Caco-2 (cell line): ENCODE measurements at regions of chr18 and their contacts with region 1.

Region 1: DNA sequence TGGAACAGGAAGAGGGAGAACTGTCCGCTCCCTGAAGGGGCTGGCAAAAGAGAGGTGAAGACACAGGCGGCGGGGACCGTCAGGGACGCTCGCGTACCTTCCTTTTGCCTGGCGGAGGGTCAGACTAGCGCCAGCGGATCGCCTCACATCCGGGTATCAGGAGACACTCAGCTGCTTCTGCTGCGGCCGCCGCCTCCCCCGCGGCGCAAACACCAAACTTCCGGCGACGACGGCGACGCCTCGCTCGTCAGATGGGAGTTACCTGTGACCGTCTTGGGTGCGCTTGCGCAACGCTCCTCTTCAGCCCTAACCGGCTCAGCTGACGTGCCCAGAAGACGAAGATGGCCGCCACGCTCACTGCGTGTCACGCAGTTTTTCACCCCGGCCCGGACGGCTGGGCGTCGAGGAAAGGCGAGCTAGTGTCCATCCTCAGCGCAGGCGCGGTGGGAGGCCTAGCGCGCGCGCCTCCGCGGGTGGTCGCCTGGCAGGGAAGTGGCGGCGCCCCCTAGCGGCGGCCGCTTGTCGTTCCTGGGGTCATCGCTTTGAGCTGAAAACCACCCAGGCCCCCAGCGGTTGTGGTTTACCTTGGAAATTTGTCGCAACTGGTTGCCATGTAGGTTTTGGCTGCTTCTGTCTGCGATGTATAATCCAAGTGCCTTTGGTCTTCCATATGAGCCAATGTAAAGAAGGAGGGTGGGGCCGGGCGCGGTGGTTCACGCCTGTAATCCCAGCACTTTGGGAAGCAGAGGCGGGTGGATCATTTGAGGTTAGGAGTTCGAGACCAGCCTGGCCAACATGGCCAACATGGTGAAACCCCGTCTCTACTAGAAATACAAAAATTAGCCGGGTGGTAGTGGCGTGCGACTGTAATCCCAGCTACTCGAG is at the start of gene ESCO1:
- DNase-seq: peak; percentile 98 to 99
- H3K4me3 ChIP-seq: peak within 1 kb of the TSS; percentile 72
- H3K4me3 Mint-ChIP-seq: peak within 1 kb of the TSS; percentile 96
- H3K27ac Mint-ChIP-seq: peak within 1 kb of the TSS; percentile 99
- H3K4me1 ChIP-seq: peaks cover 4% of the 10 kb centered on the region; the same call in 1 of the 2 replicates
- H3K4me1 Mint-ChIP-seq: peaks cover 6% of the 10 kb centered on the region
- H3K27me3 ChIP-seq: no peaks in the 10 kb centered on the region
- H3K27me3 Mint-ChIP-seq: no peaks in the 10 kb centered on the region
- CTCF ChIP-seq: peak; percentile 85 to 93
- total RNA-seq, gene ESCO1: 23.0 and 24.2 TPM in 2 replicates

Region 2: DNA sequence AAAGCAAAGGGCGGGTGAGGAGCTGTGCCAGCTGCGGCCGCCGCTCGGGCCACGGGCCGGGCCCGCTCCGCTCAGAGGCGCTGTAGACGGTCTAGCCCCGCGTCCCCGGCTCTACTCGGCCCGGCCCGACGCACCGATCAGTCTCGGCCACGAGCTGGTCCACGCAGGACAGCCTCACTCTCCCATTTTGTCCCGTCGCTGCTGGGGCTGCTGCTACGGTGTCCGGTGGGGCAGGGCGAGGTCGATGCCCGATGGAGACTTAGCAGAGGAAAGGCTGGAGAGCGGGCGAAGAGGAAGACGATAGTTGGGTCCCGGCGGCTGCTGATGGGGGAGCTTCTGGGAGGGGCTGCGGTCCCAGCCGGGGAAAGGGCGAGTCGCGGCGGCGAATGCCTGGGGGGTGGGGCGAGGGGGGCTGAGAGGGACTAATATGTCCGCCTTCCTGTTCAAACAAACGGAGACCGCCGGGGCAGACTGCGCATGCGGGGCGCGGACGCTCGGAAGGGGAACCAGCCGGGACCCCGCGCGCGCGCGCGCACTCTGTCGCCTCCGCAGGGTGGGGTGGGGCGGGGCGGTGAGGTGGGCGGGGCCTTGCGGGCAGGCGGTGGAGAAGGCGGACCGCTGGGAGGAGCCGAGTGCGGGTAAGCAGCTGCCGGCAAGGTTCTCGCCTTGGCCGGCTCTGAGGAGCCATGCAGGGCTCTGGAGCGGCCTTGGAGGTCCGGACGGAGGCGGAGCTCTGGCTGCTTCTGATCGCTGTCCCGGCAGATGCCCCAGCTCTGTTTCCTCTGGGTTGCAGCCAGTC is 489.2 kb before region 1 on chr18 and contains the start of gene ROCK1:
- CTCF ChIA-PET with region 1: interaction called, 3 read pairs
- POLR2A ChIA-PET with region 1: interaction called, 3 read pairs
- intact Hi-C with region 1: loop called (anchors 1 kb)
- DNase-seq: peak; percentile 97 to 98
- H3K4me3 ChIP-seq: peak within 1 kb of the TSS; percentile 90
- H3K4me3 Mint-ChIP-seq: no peak within 1 kb of the TSS
- H3K27ac Mint-ChIP-seq: peak within 1 kb of the TSS; percentile 79
- H3K4me1 ChIP-seq: peaks cover 7% of the 10 kb centered on the region; the same call in 1 of the 2 replicates
- H3K4me1 Mint-ChIP-seq: no peaks in the 10 kb centered on the region
- H3K27me3 ChIP-seq: no peaks in the 10 kb centered on the region
- H3K27me3 Mint-ChIP-seq: no peaks in the 10 kb centered on the region
- CTCF ChIP-seq: no peak
- total RNA-seq, gene ROCK1: 50.3 and 51.3 TPM in 2 replicates

Region 3: DNA sequence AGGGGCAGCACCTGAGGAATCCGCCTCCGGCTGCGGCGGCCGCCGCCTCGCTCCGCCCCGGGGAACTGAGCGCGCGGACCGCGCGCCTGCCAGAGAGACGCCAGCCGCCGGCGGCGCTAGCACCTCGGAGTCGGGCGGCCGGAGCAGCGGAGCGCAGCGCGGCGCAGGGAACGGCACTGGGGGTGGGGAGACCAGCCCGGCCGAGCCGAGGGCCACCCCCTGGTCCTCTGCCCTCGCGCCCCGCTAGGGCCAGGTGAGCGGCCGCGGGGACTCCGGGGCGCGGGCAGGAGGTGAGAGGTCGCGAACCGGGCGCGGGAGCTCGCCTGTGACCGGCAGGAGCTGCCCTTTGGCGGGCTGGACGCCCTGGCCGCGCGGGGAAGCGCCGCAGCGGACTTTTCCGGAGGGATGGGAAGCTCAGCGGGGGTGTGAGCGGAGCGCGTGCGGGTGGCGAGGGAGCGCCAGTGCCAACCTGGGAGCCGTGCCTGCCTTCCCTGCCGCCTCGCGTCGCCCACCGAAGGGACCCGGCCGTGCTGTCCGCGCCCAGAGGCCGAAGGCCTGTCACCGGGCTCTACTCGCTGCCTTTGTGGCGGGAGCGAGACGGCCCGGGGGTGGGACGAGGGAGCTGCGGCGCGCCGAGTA is 358.5 kb before region 1 on chr18 and contains the start of gene GREB1L:
- CTCF ChIA-PET with region 1: interaction called, 4 read pairs
- POLR2A ChIA-PET with region 1: no interaction called
- intact Hi-C with region 1: loop called (anchors 5 kb)
- DNase-seq: peak; percentile 82 to 91
- H3K4me3 ChIP-seq: peak within 1 kb of the TSS; percentile 99
- H3K4me3 Mint-ChIP-seq: peak within 1 kb of the TSS; percentile 95
- H3K27ac Mint-ChIP-seq: peak within 1 kb of the TSS; percentile 91
- H3K4me1 ChIP-seq: peaks cover 25% of the 10 kb centered on the region; the same call in 1 of the 2 replicates
- H3K4me1 Mint-ChIP-seq: peaks cover 18% of the 10 kb centered on the region
- H3K27me3 ChIP-seq: no peaks in the 10 kb centered on the region
- H3K27me3 Mint-ChIP-seq: no peaks in the 10 kb centered on the region
- CTCF ChIP-seq: peak; percentile 28 to 35
- total RNA-seq, gene GREB1L: 71.1 and 75.4 TPM in 2 replicates

Region 4: GRCh38 chr18:21548637-21549036 is 52.1 kb before region 1 on chr18:
- CTCF ChIA-PET with region 1: no interaction called
- POLR2A ChIA-PET with region 1: interaction called, 3 read pairs
- intact Hi-C with region 1: loop called (anchors 10 kb)
- DNase-seq: no peak
- H3K4me3 ChIP-seq: no peak overlapping the region
- H3K4me3 Mint-ChIP-seq: no peak overlapping the region
- H3K27ac Mint-ChIP-seq: no peak overlapping the region
- H3K4me1 ChIP-seq: peaks cover 19% of the 10 kb centered on the region
- H3K4me1 Mint-ChIP-seq: peaks cover 15% of the 10 kb centered on the region
- H3K27me3 ChIP-seq: no peaks in the 10 kb centered on the region
- H3K27me3 Mint-ChIP-seq: no peaks in the 10 kb centered on the region
- CTCF ChIP-seq: no peak

Region 5: DNA sequence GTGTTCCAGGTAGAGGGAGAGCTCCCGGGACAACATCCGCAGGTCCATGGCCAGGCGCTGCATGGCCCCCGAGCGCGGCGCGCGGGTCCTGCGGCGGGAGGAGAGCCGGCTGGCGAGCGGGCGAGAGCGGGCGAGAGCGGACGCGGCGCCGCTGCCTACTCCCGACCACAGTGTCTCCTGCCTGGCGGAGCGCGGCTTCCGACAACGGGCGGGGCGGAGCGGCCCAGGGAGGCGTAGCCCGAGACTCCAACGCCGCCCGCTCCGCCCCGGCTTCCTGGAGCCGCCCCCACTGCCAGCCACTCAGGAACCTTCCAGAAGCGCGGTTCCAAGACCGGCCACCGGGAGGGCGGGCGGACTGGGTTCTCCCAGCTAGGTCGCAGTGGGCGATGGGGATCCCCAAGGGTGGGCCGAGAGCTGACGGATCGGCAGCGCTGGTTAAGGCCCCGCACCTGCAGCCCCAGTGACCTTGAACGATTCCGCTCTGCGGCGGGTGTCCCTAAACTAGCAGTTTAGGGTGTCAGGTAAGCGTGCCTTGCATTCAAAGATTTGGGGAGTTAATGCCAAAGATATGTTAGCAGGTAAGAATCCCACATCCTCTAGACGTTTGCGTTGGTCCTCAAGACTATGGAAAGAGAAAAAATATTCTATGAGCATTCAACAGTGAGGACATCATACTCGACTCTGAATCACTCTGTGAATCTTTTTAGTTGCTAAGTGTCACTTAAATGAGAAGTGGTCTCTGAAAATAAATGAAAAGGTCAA is 104.0 kb after region 1 on chr18 and contains the start of gene ABHD3:
- CTCF ChIA-PET with region 1: interaction called, 3 read pairs
- POLR2A ChIA-PET with region 1: interaction called, 12 read pairs
- intact Hi-C with region 1: no loop called
- DNase-seq: peak; percentile 94 to 96
- H3K4me3 ChIP-seq: peak within 1 kb of the TSS; percentile 84
- H3K4me3 Mint-ChIP-seq: peak within 1 kb of the TSS; percentile 86
- H3K27ac Mint-ChIP-seq: peak within 1 kb of the TSS; percentile 64
- H3K4me1 ChIP-seq: peaks cover 6% of the 10 kb centered on the region
- H3K4me1 Mint-ChIP-seq: peaks cover 6% of the 10 kb centered on the region
- H3K27me3 ChIP-seq: no peaks in the 10 kb centered on the region
- H3K27me3 Mint-ChIP-seq: no peaks in the 10 kb centered on the region
- CTCF ChIP-seq: peak; percentile 25 to 39
- total RNA-seq, gene ABHD3: 29.3 and 31.8 TPM in 2 replicates

Region 6: GRCh38 chr18:22074282-22075069 is 473.7 kb after region 1 on chr18:
- CTCF ChIA-PET with region 1: no interaction called
- POLR2A ChIA-PET with region 1: no interaction called
- intact Hi-C with region 1: loop called (anchors 5 kb)
- DNase-seq: no peak
- H3K4me3 ChIP-seq: no peak overlapping the region
- H3K4me3 Mint-ChIP-seq: no peak overlapping the region
- H3K27ac Mint-ChIP-seq: no peak overlapping the region
- H3K4me1 ChIP-seq: peaks cover 25% of the 10 kb centered on the region
- H3K4me1 Mint-ChIP-seq: peaks cover 31% of the 10 kb centered on the region
- H3K27me3 ChIP-seq: no peaks in the 10 kb centered on the region
- H3K27me3 Mint-ChIP-seq: no peaks in the 10 kb centered on the region
- CTCF ChIP-seq: no peak

Region 7: GRCh38 chr18:22300665-22301636 is 700.2 kb after region 1 on chr18:
- CTCF ChIA-PET with region 1: no interaction called
- POLR2A ChIA-PET with region 1: no interaction called
- intact Hi-C with region 1: no loop called
- DNase-seq: peak in 1 of 2 experiments; percentile 15
- H3K4me3 ChIP-seq: no peak overlapping the region
- H3K4me3 Mint-ChIP-seq: no peak overlapping the region
- H3K27ac Mint-ChIP-seq: peak overlapping the region; percentile 13
- H3K4me1 ChIP-seq: peaks cover 14% of the 10 kb centered on the region; the same call in 1 of the 2 replicates
- H3K4me1 Mint-ChIP-seq: peaks cover 10% of the 10 kb centered on the region
- H3K27me3 ChIP-seq: no peaks in the 10 kb centered on the region
- H3K27me3 Mint-ChIP-seq: no peaks in the 10 kb centered on the region
- CTCF ChIP-seq: no peak